ENCODE measurements at regions of chr6 and their contacts with region 1.

Region 1: GRCh38 chr6:29964887-29965562 is 22.7 kb downstream of the HLA-A start:
- DNase-seq: peak; percentile 76
- H3K4me3 Mint-ChIP-seq: peak overlapping the region; percentile 92
- H3K27ac Mint-ChIP-seq: peak overlapping the region; percentile 97
- H3K4me1 Mint-ChIP-seq: peaks cover 40% of the 10 kb centered on the region
- H3K27me3 Mint-ChIP-seq: peaks cover 1% of the 10 kb centered on the region

Region 2: GRCh38 chr6:29847871-29848630 is 117.0 kb before region 1 on chr6:
- intact Hi-C with region 1: loop called (anchors 1 kb)
- DNase-seq: peak; percentile 70
- H3K4me3 Mint-ChIP-seq: no peak overlapping the region
- H3K27ac Mint-ChIP-seq: peak overlapping the region; percentile 50
- H3K4me1 Mint-ChIP-seq: peaks cover 37% of the 10 kb centered on the region
- H3K27me3 Mint-ChIP-seq: peaks cover 34% of the 10 kb centered on the region

Region 3: GRCh38 chr6:29926413-29927274 is 38.4 kb before region 1 on chr6:
- intact Hi-C with region 1: loop called (anchors 1 kb)
- DNase-seq: peak; percentile 79
- H3K4me3 Mint-ChIP-seq: peak overlapping the region; percentile 92
- H3K27ac Mint-ChIP-seq: peak overlapping the region; percentile 98
- H3K4me1 Mint-ChIP-seq: peaks cover 51% of the 10 kb centered on the region
- H3K27me3 Mint-ChIP-seq: peaks cover 4% of the 10 kb centered on the region

Region 4: DNA sequence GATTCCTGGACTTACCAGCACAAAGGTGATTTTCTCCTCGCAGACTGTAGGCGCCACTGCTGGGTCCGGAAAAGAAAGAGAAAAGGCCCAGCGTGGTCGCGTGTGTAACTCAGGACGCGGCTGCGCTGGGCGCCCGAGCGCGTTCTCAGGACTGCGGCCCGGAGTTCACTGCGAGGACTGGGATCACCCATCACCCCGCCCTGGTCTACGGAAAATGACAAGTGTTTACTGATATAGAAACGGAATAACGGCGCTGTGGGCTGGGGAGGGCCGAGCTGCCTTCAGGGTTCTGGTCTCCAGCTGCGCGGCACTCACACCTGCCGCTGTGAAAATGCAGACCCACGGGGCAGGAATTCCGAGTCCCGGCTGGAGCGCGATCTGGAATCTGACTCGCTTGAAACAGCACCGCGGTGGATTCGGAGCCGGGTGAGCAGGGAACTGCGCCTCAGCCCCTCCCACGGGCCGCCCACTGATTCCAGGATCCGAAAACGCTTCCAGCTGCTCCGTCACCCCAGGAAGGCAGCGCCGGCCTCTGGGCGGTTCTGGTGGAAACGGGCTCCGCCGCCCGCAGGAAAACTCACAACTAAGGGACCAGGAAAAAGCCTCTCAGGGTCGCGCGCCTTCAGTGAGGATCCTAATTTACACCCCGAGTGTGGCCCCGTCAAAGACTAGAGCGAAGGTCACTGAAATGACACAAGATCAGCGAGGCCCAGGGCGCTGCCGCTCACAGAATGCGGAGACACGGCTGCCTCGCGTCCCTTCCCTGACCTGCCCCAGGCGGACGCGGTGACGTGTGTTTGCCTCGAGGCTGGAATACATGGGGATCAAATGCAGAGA is 11.8 kb after region 1 on chr6:
- intact Hi-C with region 1: loop called (anchors 1 kb)
- DNase-seq: peak; percentile 44
- H3K4me3 Mint-ChIP-seq: peak overlapping the region; percentile 87
- H3K27ac Mint-ChIP-seq: peak overlapping the region; percentile 57
- H3K4me1 Mint-ChIP-seq: peaks cover 45% of the 10 kb centered on the region
- H3K27me3 Mint-ChIP-seq: peaks cover 56% of the 10 kb centered on the region

Region 5: DNA sequence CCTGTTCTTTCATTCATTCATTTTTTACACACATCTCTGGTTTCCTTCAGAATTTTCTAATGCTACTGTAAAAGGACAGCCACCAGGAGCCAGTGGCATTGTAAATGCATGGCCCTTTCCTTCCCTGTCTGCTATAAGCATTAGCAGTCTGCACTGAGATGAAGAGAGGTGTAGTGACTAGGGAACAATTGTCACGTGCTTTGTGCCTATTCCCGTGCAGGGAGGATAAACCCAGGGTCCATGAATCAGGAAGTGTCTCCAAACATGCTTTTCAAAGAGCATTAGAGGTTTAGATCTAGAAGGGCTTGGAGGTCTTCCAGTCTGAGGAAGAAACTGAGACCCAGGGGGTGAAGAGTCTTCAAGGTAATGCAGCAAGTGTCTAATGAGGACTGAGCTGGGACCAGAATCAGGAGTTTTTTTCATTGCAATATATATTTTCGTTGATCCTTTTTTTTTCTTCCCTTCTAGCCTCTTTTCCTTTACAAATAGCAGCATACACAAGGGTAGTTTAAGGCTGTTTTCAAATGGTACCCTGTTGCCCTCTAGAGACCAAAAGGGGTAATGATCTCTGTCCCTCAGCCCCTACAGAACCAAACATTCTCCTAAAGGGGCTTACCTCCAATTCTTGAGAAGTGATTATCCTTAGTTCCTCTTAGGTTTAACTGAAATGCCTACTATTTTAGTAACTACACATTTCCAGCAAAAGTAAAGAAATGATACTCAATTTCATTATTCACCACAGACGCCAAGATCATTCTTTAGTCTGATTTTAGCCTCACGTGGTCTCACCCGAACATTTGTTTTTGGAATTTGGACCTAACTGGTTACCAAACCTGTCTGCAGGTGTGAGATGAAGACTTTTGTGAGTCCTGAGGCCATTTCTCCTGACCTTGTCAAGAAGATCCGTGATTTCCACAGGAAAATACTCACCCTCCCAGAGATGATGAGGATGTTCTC is 204.9 kb after region 1 on chr6:
- intact Hi-C with region 1: loop called (anchors 5 kb)
- DNase-seq: no peak
- H3K4me3 Mint-ChIP-seq: no peak overlapping the region
- H3K27ac Mint-ChIP-seq: no peak overlapping the region
- H3K4me1 Mint-ChIP-seq: peaks cover 46% of the 10 kb centered on the region
- H3K27me3 Mint-ChIP-seq: peaks cover 39% of the 10 kb centered on the region

Measured in activated T-helper 1 cell treated with anti-CD3 and anti-CD28 coated beads, Interleukin-12 subunit alpha, Interleukin-12 subunit beta, Interleukin-2, Interleukin-4 antibody, amounts not matched to agents 30 ng/mL and 10 ng/mL and 1 ng/mL, durations not matched to agents 14 hours and 24 hours and 36 hours (primary cell).